Activated CD4-positive, alpha-beta T cell treated with anti-CD3 and anti-CD28 coated beads for 36 hours (primary cell): ENCODE measurements at regions of chr16 and their contacts with region 1.

Region 1: DNA sequence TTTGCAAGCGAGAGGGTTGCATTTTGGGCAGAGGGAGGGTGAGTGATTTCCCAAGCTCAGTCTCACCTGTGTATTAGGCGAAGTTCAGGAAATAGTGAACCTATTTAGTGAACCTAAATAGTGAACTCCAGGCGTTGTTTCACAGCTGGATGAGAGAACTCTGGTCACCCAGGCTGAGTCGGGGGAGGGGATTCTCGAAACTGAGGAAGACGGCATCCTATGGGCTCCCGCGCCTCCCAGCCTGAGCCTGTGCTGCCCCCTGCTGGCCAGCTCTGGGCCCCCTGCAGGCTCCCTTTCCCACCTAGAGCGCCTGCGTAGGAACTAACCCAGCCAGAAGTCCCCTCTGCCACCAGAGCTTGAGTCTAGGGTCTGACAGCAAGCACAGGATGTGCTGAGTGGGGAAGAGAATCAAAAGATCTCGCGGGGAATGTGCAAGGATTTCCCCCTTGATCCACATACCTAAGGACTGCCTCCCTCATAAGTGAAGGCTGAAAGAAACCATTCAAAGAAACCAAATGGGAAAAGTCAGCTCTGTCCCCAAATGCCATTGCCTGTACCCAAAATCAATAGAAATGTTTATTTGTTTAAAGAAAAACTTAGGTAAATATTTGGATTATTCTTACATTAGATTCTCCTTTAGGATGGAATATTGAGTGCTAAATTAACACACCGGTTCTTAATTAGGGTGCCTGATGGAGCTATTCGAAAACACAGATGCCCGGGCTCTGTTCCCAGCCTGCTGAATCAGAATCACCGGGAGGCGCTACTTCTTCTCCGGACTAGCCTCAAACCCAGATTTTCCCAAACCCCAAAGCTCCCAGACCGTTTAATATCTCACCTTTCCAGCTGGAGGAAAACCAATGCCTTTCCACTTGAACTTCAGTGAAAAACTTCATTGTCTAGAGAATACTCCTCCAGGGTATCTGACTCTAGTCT is 14.8 kb upstream of the MARVELD3 start:
- DNase-seq: peak; percentile 90
- ATAC-seq: peak; percentile 84
- H3K4me3 Mint-ChIP-seq: no peak overlapping the region
- H3K27ac Mint-ChIP-seq: no peak overlapping the region
- H3K4me1 Mint-ChIP-seq: peaks cover 14% of the 10 kb centered on the region
- H3K27me3 Mint-ChIP-seq: peaks cover 13% of the 10 kb centered on the region

Region 2: GRCh38 chr16:71441348-71441781 is 169.8 kb before region 1 on chr16:
- CTCF ChIA-PET with region 1: interaction called, 3 read pairs
- POLR2A ChIA-PET with region 1: no interaction called
- intact Hi-C with region 1: loop called in 1 of 2 experiments (anchors 2 kb)
- DNase-seq: peak; percentile 70
- ATAC-seq: peak; percentile 64
- H3K4me3 Mint-ChIP-seq: no peak overlapping the region
- H3K27ac Mint-ChIP-seq: no peak overlapping the region
- H3K4me1 Mint-ChIP-seq: no peaks in the 10 kb centered on the region
- H3K27me3 Mint-ChIP-seq: peaks cover 22% of the 10 kb centered on the region

Region 3: DNA sequence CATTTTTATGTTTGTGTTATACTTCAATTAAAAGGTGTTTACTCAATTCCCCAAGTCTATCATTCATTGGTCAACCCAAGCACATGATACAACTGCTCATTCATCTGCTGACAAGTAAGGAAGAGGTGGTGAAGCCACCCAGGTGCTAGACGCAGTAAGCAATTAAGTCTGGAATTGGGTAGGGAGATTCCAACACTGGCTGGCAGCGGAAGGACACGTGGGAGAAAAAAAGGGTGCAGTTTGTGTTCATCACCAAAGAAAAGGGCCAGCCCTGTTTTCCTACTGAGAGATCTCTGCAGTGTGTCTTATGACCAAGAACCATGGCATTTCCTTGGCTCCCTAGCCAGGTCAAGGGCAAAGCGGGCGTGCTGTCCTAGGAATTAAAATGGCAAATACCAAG is 137.3 kb before region 1 on chr16:
- CTCF ChIA-PET with region 1: no interaction called
- POLR2A ChIA-PET with region 1: no interaction called
- intact Hi-C with region 1: no loop called
- DNase-seq: no peak
- ATAC-seq: no peak
- H3K4me3 Mint-ChIP-seq: no peak overlapping the region
- H3K27ac Mint-ChIP-seq: no peak overlapping the region
- H3K4me1 Mint-ChIP-seq: no peaks in the 10 kb centered on the region
- H3K27me3 Mint-ChIP-seq: no peaks in the 10 kb centered on the region

Region 4: DNA sequence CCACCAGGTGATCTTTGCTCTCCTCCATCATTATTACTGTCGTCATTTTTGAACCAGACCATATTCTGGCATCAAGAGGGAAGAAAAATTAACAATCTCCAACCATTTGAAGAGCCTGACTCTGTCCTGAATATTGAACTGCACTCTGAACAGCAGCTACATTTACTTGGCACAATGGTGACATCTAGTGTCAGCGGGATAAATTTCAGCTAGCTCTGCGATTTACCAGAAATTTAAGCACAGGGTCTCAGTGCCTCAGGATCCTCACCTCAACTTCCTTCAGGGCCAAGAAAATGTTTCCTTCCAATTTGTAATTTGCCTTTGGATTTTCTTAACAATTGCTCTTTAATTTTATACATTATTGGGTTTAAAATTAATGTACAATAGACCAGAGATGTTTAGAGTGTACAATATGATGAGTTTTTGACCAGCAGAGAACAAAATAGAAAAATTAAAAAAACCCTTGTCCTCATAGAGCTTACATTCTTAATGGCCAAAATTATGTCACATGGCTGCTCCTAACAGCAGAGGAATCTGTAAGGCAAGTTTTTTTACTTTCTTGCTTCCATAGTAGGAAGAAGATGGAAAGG is 111.3 kb before region 1 on chr16:
- CTCF ChIA-PET with region 1: interaction called, 10 read pairs
- POLR2A ChIA-PET with region 1: no interaction called
- intact Hi-C with region 1: loop called (anchors 1 to 5 kb)
- DNase-seq: peak; percentile 61
- ATAC-seq: peak; percentile 75
- H3K4me3 Mint-ChIP-seq: no peak overlapping the region
- H3K27ac Mint-ChIP-seq: no peak overlapping the region
- H3K4me1 Mint-ChIP-seq: no peaks in the 10 kb centered on the region
- H3K27me3 Mint-ChIP-seq: peaks cover 6% of the 10 kb centered on the region

Region 5: DNA sequence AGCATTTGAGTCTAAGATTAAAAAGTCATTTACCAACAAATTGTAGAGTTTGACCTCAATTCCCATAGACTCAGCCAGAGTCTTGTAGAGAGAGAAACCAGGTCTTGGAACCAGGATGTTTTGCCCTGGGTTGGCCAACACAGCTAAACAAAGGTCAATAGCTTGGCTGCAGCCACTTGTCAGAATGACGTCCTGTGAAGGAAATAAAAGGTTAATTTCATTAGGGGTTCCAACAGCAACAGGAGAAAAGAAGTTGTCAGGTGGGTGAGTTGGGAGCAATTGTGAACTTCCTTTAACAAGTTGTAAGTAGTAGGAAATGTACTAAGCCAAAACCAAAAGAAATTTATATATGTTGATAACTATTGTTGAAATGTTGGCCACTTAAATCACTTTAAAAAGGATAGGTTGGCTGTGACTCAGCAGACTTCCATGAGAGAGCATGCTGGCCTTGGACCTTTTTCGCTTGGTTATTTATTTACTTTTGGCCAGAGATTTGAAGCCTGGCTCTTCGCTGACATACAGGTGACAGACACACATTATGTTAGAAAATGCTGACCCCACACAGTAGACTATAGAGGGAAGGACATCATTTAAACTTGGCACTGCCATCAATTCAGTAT is 38.6 kb before region 1 on chr16:
- CTCF ChIA-PET with region 1: interaction called, 57 read pairs
- POLR2A ChIA-PET with region 1: no interaction called
- intact Hi-C with region 1: no loop called
- DNase-seq: no peak
- ATAC-seq: no peak
- H3K4me3 Mint-ChIP-seq: no peak overlapping the region
- H3K27ac Mint-ChIP-seq: no peak overlapping the region
- H3K4me1 Mint-ChIP-seq: no peaks in the 10 kb centered on the region
- H3K27me3 Mint-ChIP-seq: peaks cover 9% of the 10 kb centered on the region

Region 6: GRCh38 chr16:71622088-71622487 is 10.9 kb after region 1 on chr16:
- CTCF ChIA-PET with region 1: interaction called, 13 read pairs
- POLR2A ChIA-PET with region 1: no interaction called
- intact Hi-C with region 1: no loop called
- DNase-seq: no peak
- ATAC-seq: no peak
- H3K4me3 Mint-ChIP-seq: no peak overlapping the region
- H3K27ac Mint-ChIP-seq: no peak overlapping the region
- H3K4me1 Mint-ChIP-seq: peaks cover 9% of the 10 kb centered on the region
- H3K27me3 Mint-ChIP-seq: peaks cover 18% of the 10 kb centered on the region

Region 7: GRCh38 chr16:71723537-71724319 is 112.5 kb after region 1 on chr16:
- CTCF ChIA-PET with region 1: no interaction called
- POLR2A ChIA-PET with region 1: no interaction called
- intact Hi-C with region 1: no loop called
- DNase-seq: peak; percentile 87
- ATAC-seq: peak; percentile 87
- H3K4me3 Mint-ChIP-seq: peak overlapping the region; percentile 95
- H3K27ac Mint-ChIP-seq: peak overlapping the region; percentile 68
- H3K4me1 Mint-ChIP-seq: peaks cover 16% of the 10 kb centered on the region
- H3K27me3 Mint-ChIP-seq: no peaks in the 10 kb centered on the region

Region 8: DNA sequence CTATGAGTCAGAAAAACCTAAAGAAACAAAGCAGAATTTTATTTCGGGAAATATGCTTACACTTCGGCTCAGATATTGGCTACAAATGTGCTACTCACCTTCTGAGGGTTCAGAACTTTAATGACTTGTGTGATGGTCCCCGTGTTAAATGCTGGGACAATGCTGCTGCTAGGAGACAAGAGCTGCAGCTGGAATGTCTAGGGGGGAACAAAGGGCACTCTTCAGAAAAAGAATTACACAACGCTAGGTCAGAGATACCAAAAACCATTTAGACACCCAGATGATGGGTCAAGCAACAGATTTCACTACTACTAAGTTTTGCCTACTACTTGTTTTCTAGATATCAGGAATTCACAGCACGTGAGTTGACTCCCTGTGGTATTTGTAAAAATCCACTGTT is 123.3 kb after region 1 on chr16:
- CTCF ChIA-PET with region 1: no interaction called
- POLR2A ChIA-PET with region 1: no interaction called
- intact Hi-C with region 1: no loop called
- DNase-seq: no peak
- ATAC-seq: no peak
- H3K4me3 Mint-ChIP-seq: no peak overlapping the region
- H3K27ac Mint-ChIP-seq: no peak overlapping the region
- H3K4me1 Mint-ChIP-seq: peaks cover 1% of the 10 kb centered on the region
- H3K27me3 Mint-ChIP-seq: no peaks in the 10 kb centered on the region